H1 (cell line): ENCODE measurements at regions of chr3 and their contacts with region 1.

Region 1: GRCh38 chr3:119600732-119601131 is 3.0 kb downstream of the PLA1A start:
- DNase-seq: peak in 1 of 2 experiments; percentile 69
- H3K4me3 ChIP-seq: no peak overlapping the region
- H3K27ac ChIP-seq: no peak overlapping the region
- H3K4me1 ChIP-seq: peaks cover 0 to 3% (median 0%) of the 10 kb centered on the region in 4 experiments; a peak in 3 of 7 replicates
- H3K27me3 ChIP-seq: no peaks in the 10 kb centered on the region
- CTCF ChIP-seq: peak; percentile 68 to 98 (median 94)
- EP300 ChIP-seq: no peak
- POLR2A ChIP-seq: no peak
- RAD21 ChIP-seq: peak; percentile 84 to 88

Region 2: GRCh38 chr3:119437691-119438258 is 163.0 kb before region 1 on chr3:
- CTCF ChIA-PET with region 1: no interaction called
- POLR2A ChIA-PET with region 1: no interaction called
- DNase-seq: no peak
- H3K4me3 ChIP-seq: no peak overlapping the region
- H3K27ac ChIP-seq: no peak overlapping the region
- H3K4me1 ChIP-seq: no peaks in the 10 kb centered on the region
- H3K27me3 ChIP-seq: no peaks in the 10 kb centered on the region
- CTCF ChIP-seq: no peak
- EP300 ChIP-seq: no peak
- POLR2A ChIP-seq: no peak
- RAD21 ChIP-seq: no peak

Region 3: GRCh38 chr3:119542168-119542767 is 58.5 kb before region 1 on chr3:
- CTCF ChIA-PET with region 1: no interaction called
- POLR2A ChIA-PET with region 1: no interaction called
- DNase-seq: no peak
- H3K4me3 ChIP-seq: no peak overlapping the region
- H3K27ac ChIP-seq: no peak overlapping the region
- H3K4me1 ChIP-seq: no peaks in the 10 kb centered on the region
- H3K27me3 ChIP-seq: peaks cover 0 to 1% (median 0%) of the 10 kb centered on the region in 4 experiments; a peak in 1 of 7 replicates
- CTCF ChIP-seq: no peak
- EP300 ChIP-seq: no peak
- POLR2A ChIP-seq: no peak
- RAD21 ChIP-seq: no peak

Region 4: GRCh38 chr3:119588112-119588511 is 12.6 kb before region 1 on chr3:
- CTCF ChIA-PET with region 1: interaction called, 23 read pairs
- POLR2A ChIA-PET with region 1: no interaction called
- DNase-seq: no peak
- H3K4me3 ChIP-seq: no peak overlapping the region
- H3K27ac ChIP-seq: no peak overlapping the region
- H3K4me1 ChIP-seq: peaks cover 1 to 9% (median 5%) of the 10 kb centered on the region in 4 experiments; a peak in 4 of 7 replicates
- H3K27me3 ChIP-seq: no peaks in the 10 kb centered on the region
- CTCF ChIP-seq: no peak
- EP300 ChIP-seq: no peak
- POLR2A ChIP-seq: no peak
- RAD21 ChIP-seq: no peak

Region 5: DNA sequence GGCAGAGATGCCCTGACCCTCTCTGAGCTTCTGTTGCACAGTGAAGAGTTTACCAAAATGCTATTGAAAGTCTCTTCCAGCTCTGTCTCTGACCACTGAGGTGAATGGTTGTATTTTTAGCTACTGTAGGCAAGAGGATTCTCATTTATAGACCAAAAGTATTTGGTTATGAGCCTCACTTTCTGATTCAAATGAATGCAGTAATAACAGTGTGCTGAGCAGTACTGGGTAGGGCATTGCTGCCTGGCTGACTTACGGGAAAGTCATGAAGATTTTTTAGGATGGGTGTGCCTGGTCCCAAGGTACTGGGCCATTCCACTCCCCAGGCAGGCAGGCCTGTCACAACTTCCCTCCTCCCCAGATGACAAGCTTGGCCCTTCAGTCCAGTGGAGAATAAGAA is 12.5 kb after region 1 on chr3:
- CTCF ChIA-PET with region 1: interaction called, 32 read pairs
- POLR2A ChIA-PET with region 1: interaction called, 4 read pairs
- DNase-seq: no peak
- H3K4me3 ChIP-seq: no peak overlapping the region
- H3K27ac ChIP-seq: no peak overlapping the region
- H3K4me1 ChIP-seq: no peaks in the 10 kb centered on the region; a peak in 1 of 7 replicates
- H3K27me3 ChIP-seq: no peaks in the 10 kb centered on the region
- CTCF ChIP-seq: no peak
- EP300 ChIP-seq: no peak
- POLR2A ChIP-seq: no peak
- RAD21 ChIP-seq: no peak

Region 6: DNA sequence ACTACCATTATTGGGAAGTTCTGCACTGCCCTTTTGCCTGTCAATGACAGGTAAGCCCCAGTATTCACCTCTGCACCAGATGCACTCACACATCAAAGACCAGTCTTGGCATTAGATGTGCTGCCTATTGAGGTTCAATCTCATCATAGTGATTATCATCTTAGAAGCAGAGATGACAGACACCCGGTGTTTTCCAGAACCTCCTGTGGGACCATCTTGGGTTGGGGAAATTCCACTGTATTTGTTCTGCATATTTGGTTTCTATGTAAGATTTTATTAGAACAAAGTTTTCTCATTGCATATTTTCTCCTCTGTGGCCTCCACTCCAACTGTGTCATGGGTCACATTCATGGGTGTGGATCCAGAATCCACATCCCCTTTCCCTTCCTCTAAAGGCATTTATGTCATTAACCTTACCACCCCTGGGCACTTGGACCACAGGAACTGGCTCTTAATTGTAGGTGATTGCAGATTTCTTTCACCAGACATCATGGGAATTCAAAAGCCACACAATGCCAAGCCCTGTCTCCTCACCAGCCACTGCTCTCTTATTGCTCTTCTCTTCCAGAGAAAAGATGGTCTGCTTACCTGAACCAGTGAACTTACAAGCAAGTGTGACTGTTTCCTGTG is 28.2 kb after region 1 on chr3:
- CTCF ChIA-PET with region 1: interaction called, 12 read pairs
- POLR2A ChIA-PET with region 1: interaction called, 3 read pairs
- DNase-seq: no peak
- H3K4me3 ChIP-seq: no peak overlapping the region
- H3K27ac ChIP-seq: no peak overlapping the region
- H3K4me1 ChIP-seq: peaks cover 0 to 6% (median 1%) of the 10 kb centered on the region in 4 experiments; a peak in 2 of 7 replicates
- H3K27me3 ChIP-seq: no peaks in the 10 kb centered on the region
- CTCF ChIP-seq: no peak
- EP300 ChIP-seq: no peak
- POLR2A ChIP-seq: no peak
- RAD21 ChIP-seq: no peak

Region 7: DNA sequence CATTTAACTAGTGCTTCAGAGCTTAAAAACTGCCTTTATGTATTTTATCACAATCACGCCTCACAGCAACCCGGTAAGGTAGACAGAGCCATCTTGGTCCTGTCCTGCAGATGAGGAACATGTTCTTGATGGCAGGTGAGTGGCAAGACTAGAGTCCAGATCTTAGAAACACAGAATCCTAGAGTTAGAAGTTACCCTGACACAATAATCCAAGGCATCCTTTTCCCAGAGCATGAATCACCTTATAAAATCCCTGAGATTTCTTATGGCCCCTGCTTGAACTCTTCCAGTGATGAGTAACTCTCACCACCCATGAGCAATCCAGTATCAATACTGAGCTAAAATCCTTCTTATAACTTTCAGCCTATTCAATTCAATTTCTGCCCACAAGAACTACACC is 42.8 kb after region 1 on chr3:
- CTCF ChIA-PET with region 1: interaction called, 11 read pairs
- POLR2A ChIA-PET with region 1: no interaction called
- DNase-seq: no peak
- H3K4me3 ChIP-seq: no peak overlapping the region
- H3K27ac ChIP-seq: no peak overlapping the region
- H3K4me1 ChIP-seq: peaks cover 0 to 7% (median 2%) of the 10 kb centered on the region in 4 experiments; a peak in 3 of 7 replicates
- H3K27me3 ChIP-seq: no peaks in the 10 kb centered on the region
- CTCF ChIP-seq: no peak
- EP300 ChIP-seq: no peak
- POLR2A ChIP-seq: no peak
- RAD21 ChIP-seq: no peak

Region 8: DNA sequence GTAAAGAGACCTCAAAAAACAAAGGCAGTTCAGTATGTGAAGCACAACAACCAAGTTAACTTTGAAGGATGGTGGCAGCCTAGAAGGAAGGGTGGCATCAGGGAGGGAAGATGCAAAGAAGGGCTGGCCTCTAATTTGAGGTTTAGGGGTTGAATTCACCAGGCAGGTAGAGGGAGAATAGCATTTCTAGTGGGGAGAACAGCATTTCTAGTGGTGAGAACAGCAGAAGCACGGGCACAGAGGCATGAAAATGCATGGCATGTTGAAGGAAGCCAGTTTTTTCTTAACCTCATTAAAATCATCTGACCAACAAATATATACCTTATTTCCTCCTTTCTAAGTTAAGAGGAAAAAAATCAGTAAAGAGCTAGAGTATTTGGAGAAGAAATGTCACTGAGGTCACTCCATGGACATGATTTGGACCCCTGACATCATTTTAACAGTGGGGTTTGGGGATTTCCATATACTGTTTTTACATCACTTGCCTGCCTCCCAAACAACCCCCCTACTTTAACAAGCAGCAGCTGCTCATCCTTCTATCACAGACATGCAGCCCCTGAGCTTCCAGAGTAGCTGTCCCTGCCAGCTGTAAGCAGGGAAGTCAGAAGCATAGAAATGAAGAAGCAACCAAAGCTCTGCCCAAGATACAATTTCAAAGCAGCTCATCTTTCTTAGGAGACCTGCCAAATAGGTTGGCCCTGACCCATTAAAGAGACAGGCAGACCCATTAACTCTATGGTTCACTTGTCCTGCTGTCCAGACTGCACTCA is 62.1 kb after region 1 on chr3:
- CTCF ChIA-PET with region 1: interaction called, 11 read pairs
- POLR2A ChIA-PET with region 1: interaction called, 4 read pairs
- DNase-seq: no peak
- H3K4me3 ChIP-seq: no peak overlapping the region
- H3K27ac ChIP-seq: no peak overlapping the region
- H3K4me1 ChIP-seq: no peaks in the 10 kb centered on the region
- H3K27me3 ChIP-seq: no peaks in the 10 kb centered on the region
- CTCF ChIP-seq: peak in 1 of 3 experiments; percentile 30; a peak in 1 of 4 replicates
- EP300 ChIP-seq: no peak
- POLR2A ChIP-seq: no peak
- RAD21 ChIP-seq: peak; percentile 2 to 7; a peak in 1 of 4 replicates

Region 9: DNA sequence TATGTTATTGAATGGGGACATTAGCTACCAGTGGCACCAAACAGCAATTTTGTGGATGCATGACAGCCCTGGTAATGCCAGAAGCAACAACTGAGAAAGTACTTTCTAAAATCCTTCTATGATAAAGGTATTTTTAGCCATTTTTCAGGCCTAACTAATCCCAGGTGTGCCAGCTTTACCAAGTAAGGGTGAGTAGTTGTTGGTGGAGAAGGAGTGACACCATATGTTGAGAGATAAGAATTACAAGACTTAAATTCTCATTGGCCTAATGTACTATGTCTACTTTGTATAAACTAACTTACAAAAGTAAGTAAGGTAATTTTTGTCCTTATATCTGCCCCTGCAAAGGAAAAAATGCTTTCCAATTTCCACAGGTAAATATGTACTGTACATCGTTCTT is 80.5 kb after region 1 on chr3:
- CTCF ChIA-PET with region 1: interaction called, 21 read pairs
- POLR2A ChIA-PET with region 1: no interaction called
- DNase-seq: no peak
- H3K4me3 ChIP-seq: no peak overlapping the region
- H3K27ac ChIP-seq: no peak overlapping the region
- H3K4me1 ChIP-seq: no peaks in the 10 kb centered on the region
- H3K27me3 ChIP-seq: no peaks in the 10 kb centered on the region
- CTCF ChIP-seq: peak in 2 of 3 experiments; percentile 35 to 43; a peak in 2 of 4 replicates
- EP300 ChIP-seq: no peak
- POLR2A ChIP-seq: no peak
- RAD21 ChIP-seq: peak; percentile 78 to 85